Prostate gland (tissue), 2 donors: ENCODE measurements at regions of chr10 and their contacts with region 1.

Region 1: GRCh38 chr10:94108200-94108599 is 114.5 kb downstream of the PLCE1 start:
- DNase-seq: no peak
- H3K4me3 ChIP-seq: no peak overlapping the region
- H3K27ac ChIP-seq: no peak overlapping the region
- H3K4me1 ChIP-seq: no peaks in the 10 kb centered on the region
- H3K27me3 ChIP-seq: no peaks in the 10 kb centered on the region
- CTCF ChIP-seq: no peak
- POLR2A ChIP-seq: no peak

Region 2: DNA sequence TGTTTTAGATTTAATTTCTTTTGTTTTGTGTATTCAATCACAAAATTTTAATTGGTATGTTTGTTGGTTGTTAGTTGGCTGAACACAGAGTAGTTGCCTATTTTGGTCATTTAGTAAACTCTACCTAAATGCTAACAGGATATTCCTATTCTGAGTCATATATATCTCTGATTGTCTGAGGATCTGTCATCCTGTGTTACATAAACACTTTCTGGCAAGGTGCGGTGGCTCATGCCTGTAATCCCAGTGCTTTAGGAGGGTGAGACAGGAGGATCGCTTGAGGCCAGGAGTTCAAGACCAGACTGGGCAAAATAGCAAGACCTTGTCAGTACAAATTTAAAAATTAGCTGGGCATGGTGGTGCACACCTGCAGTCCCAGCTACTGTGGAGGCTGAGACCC is 64.1 kb after region 1 on chr10:
- intact Hi-C with region 1: no loop called
- DNase-seq: no peak
- H3K4me3 ChIP-seq: no peak overlapping the region
- H3K27ac ChIP-seq: no peak overlapping the region
- H3K4me1 ChIP-seq: no peaks in the 10 kb centered on the region
- H3K27me3 ChIP-seq: no peaks in the 10 kb centered on the region
- CTCF ChIP-seq: no peak
- POLR2A ChIP-seq: no peak

Region 3: GRCh38 chr10:94194256-94194655 is 86.1 kb after region 1 on chr10:
- intact Hi-C with region 1: loop called (anchors 10 kb)
- DNase-seq: no peak
- H3K4me3 ChIP-seq: no peak overlapping the region
- H3K27ac ChIP-seq: no peak overlapping the region
- H3K4me1 ChIP-seq: no peaks in the 10 kb centered on the region
- H3K27me3 ChIP-seq: no peaks in the 10 kb centered on the region
- CTCF ChIP-seq: no peak
- POLR2A ChIP-seq: no peak